H1 (cell line): ENCODE measurements at regions of chr11 and their contacts with region 1.

Region 1: GRCh38 chr11:62974848-62975522 is 9.8 kb downstream of the SLC22A6 start:
- DNase-seq: peak; percentile 25 to 67
- H3K4me3 ChIP-seq: no peak overlapping the region
- H3K27ac ChIP-seq: no peak overlapping the region
- H3K4me1 ChIP-seq: peaks cover 0 to 4% (median 0%) of the 10 kb centered on the region in 4 experiments; a peak in 2 of 7 replicates
- H3K27me3 ChIP-seq: peaks cover 0 to 4% (median 1%) of the 10 kb centered on the region in 4 experiments; a peak in 3 of 7 replicates
- CTCF ChIP-seq: peak; percentile 71 to 90 (median 87)
- EP300 ChIP-seq: no peak
- POLR2A ChIP-seq: no peak
- RAD21 ChIP-seq: peak; percentile 57 to 67

Region 2: DNA sequence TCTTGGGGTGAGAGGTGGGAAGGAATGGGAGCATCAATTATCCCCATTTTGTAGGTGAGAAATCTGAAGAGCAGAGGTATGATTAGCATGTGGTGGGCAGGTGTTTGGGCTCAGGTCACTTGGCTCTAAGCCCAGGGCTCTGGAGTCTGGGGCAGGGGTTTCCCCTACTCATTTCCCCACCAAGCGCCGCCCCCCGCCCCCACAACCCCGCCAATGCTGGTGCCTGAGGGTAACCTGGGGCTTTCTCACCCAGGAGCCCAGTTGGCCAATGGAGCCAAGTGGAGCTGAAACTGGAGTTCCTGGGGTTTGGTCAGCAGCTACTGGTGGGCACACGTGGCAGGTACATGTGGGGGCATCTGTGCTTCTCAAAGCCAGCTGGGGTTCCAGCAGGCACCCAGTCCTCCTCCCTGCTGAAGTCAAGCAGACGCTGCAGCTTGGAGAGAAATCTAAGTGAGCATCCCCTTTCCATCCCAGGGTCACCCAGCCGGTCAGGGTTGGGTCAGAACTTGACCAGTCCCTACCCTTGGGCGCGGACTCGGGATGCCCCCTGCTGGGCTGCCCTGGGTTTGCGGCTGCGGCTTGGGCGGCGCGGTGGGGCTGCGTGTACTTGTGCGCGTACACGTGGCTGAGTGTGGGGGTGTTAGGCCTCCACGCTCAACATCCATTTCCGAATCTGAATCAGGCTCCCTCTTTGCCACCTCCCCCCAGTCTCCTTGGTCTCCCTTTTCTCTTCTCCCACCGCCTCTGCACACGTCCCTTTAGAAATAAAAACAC is 52.1 kb before region 1 on chr11:
- CTCF ChIA-PET with region 1: interaction called, 68 read pairs
- POLR2A ChIA-PET with region 1: no interaction called
- DNase-seq: peak in 1 of 2 experiments; percentile 87
- H3K4me3 ChIP-seq: peak overlapping the region; percentile 3 to 64 (median 16); a peak in 4 of 8 replicates
- H3K27ac ChIP-seq: no peak overlapping the region
- H3K4me1 ChIP-seq: peaks cover 6 to 35% (median 21%) of the 10 kb centered on the region in 4 experiments
- H3K27me3 ChIP-seq: peaks cover 15 to 45% (median 41%) of the 10 kb centered on the region in 4 experiments
- CTCF ChIP-seq: peak; percentile 62 to 79 (median 69)
- EP300 ChIP-seq: no peak
- POLR2A ChIP-seq: no peak
- RAD21 ChIP-seq: peak; percentile 60 to 76

Region 3: DNA sequence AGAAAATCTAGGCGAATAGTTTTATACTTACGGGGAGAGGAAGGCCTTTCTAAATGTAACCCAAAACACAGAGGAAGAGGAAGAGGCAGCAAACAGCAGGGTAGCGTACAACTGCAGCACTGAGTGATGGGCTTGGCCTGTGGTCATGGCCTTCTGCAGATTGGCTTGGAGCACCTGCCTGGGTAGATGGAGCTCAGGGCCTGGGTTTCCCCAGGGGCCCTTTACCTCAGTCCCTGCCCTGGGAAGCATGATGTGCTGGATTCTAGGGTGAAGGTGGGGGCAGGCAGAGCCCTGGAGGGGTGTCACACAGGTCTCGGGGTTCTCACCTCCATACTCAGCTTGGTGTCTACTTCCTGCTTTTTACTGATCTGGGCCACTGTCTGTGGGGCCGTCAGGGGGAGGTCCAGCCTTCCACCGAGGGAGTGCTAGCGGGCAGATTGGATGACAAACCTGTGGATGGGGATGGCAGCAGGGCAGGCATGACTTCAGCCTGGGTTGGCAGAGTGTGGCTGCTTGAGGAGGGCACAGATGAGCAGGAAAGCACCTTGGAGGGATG is 26.1 kb before region 1 on chr11:
- CTCF ChIA-PET with region 1: interaction called, 26 read pairs
- POLR2A ChIA-PET with region 1: no interaction called
- DNase-seq: no peak
- H3K4me3 ChIP-seq: no peak overlapping the region
- H3K27ac ChIP-seq: no peak overlapping the region
- H3K4me1 ChIP-seq: no peaks in the 10 kb centered on the region
- H3K27me3 ChIP-seq: no peaks in the 10 kb centered on the region
- CTCF ChIP-seq: no peak
- EP300 ChIP-seq: no peak
- POLR2A ChIP-seq: no peak
- RAD21 ChIP-seq: no peak

Region 4: GRCh38 chr11:62999649-63000048 is 24.7 kb after region 1 on chr11:
- CTCF ChIA-PET with region 1: interaction called, 67 read pairs
- POLR2A ChIA-PET with region 1: no interaction called
- DNase-seq: no peak
- H3K4me3 ChIP-seq: no peak overlapping the region
- H3K27ac ChIP-seq: no peak overlapping the region
- H3K4me1 ChIP-seq: no peaks in the 10 kb centered on the region; a peak in 1 of 7 replicates
- H3K27me3 ChIP-seq: no peaks in the 10 kb centered on the region
- CTCF ChIP-seq: no peak
- EP300 ChIP-seq: no peak
- POLR2A ChIP-seq: no peak
- RAD21 ChIP-seq: no peak

Region 5: DNA sequence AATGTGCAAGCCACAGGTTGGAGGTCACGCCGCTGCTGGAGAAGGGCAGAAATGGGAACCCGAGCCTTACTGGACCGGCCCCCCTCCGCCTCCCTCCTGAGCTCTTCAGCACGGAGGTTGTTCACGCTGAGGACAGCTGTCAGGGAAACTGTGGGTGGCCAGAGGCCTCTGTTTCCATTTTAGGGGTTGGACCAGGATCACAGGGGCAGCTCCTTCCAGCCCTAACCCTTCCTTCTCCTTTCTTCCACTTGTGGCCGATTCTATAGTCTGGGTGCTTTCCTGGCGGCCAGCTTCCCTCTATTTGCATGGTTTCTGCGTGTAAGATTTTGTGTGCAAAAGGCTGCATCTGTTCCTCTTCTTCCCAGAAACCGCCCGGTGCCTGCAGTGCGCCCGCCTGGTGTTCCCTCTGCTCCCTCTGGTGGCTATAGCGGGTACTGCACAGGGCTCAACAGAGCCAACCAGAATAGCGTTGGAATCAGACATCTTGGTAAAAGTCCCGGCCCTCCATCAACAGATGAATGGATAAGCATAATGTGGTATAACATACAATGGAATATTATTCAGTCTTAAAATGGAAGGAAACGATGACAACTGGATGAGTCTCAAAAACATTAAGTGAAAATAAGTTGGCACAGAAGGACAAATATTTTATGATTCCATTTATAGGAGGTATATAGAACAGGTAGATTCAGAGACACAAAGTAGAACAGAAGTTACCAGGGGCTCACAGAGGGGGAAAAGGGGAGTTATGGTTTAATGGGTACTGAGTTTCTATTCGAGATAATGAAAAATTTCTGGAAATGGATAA is 49.1 kb after region 1 on chr11:
- CTCF ChIA-PET with region 1: interaction called, 201 read pairs
- POLR2A ChIA-PET with region 1: interaction called, 4 read pairs
- DNase-seq: peak; percentile 29 to 97
- H3K4me3 ChIP-seq: no peak overlapping the region
- H3K27ac ChIP-seq: no peak overlapping the region
- H3K4me1 ChIP-seq: peaks cover 0 to 7% (median 4%) of the 10 kb centered on the region in 4 experiments; a peak in 5 of 7 replicates
- H3K27me3 ChIP-seq: peaks cover 0 to 4% (median 2%) of the 10 kb centered on the region in 4 experiments; a peak in 3 of 7 replicates
- CTCF ChIP-seq: peak; percentile 95 to 98 (median 96)
- EP300 ChIP-seq: no peak
- POLR2A ChIP-seq: no peak
- RAD21 ChIP-seq: peak; percentile 84 to 87

Region 6: DNA sequence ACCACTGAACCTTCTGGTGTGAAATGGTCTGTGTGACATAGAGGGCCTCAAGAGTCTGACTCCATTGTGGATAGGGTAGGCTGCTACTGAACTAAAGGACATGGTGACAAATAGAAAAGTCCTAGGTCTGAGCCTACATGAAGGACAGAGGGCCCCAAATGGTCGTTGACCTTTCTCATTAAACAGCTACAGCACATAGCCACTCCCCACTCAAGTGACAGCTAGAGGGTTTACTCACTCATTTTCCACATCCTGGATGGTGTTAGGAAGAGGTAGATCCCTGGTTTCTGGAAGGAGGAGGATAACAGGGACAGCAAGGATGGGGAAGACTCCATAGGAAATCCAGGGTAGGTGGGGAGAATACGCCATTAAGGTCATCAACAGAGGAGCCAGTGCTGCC is 105.7 kb after region 1 on chr11:
- CTCF ChIA-PET with region 1: no interaction called
- POLR2A ChIA-PET with region 1: no interaction called
- DNase-seq: no peak
- H3K4me3 ChIP-seq: no peak overlapping the region
- H3K27ac ChIP-seq: no peak overlapping the region
- H3K4me1 ChIP-seq: no peaks in the 10 kb centered on the region
- H3K27me3 ChIP-seq: no peaks in the 10 kb centered on the region
- CTCF ChIP-seq: no peak
- EP300 ChIP-seq: no peak
- POLR2A ChIP-seq: no peak
- RAD21 ChIP-seq: no peak